ENCODE measurements at regions of chr17 and their contacts with region 1.

Region 1: GRCh38 chr17:49031965-49032928 is 35.1 kb downstream of the IGF2BP1 start:
- DNase-seq: peak in 1 of 2 experiments; percentile 60
- H3K4me3 ChIP-seq: no peak overlapping the region
- H3K27ac ChIP-seq: 0 out of 2 replicates have a peak overlapping the region, but pooled peaks have one; percentile 21
- H3K4me1 ChIP-seq: peaks cover 2 to 8% (median 5%) of the 10 kb centered on the region in 4 experiments; a peak in 4 of 7 replicates
- H3K27me3 ChIP-seq: no peaks in the 10 kb centered on the region
- CTCF ChIP-seq: peak; percentile 55 to 91 (median 90)
- EP300 ChIP-seq: 0 out of 3 replicates have a peak, but pooled peaks of 1 of the 2 experiments have one; percentile 51
- POLR2A ChIP-seq: 0 out of 3 replicates have a peak, but pooled peaks of 1 of the 2 experiments have one; percentile 33
- RAD21 ChIP-seq: peak; percentile 97 to 99

Region 2: DNA sequence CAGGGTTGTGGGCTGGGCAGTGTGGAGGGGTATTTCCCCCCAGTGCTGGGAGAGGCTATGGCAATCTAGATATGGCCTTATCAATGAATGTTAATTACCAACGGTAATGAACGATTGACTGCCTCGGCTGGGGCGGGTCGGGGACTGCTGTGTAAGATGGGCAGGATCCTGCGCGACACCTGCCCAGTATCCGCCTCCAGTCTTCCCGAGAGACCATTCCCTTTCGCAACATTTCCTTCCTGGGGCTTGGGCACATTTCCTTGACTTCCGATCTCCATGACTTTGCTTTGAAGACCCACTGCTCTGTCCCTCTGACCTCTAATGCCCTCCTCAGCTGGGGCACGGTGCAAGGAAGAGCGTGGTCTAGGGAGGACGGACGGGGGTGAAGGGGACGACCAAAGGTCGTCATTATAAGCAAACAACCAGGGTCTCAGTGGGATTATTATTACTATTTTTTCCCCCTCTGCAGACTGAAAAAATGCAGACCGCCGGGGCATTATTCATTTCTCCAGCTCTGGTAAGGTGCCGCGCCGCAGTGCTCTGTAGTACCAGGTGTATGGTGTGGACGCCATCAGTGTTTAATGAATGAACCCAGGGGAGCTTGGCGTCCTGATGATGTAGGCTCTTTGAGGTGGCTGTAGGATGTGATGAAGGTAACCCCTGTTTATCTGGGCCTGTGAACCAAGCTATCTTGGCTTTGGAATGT is 139.2 kb before region 1 on chr17:
- CTCF ChIA-PET with region 1: interaction called, 11 read pairs
- POLR2A ChIA-PET with region 1: interaction called, 6 read pairs
- DNase-seq: no peak
- H3K4me3 ChIP-seq: peak overlapping the region; percentile 90 to 95 (median 94)
- H3K27ac ChIP-seq: peak overlapping the region; percentile 33; the same call in 1 of the 2 replicates
- H3K4me1 ChIP-seq: peaks cover 0 to 6% (median 3%) of the 10 kb centered on the region in 4 experiments; a peak in 3 of 7 replicates
- H3K27me3 ChIP-seq: no peaks in the 10 kb centered on the region
- CTCF ChIP-seq: no peak
- EP300 ChIP-seq: no peak
- POLR2A ChIP-seq: peak in 1 of 2 experiments; percentile 57; a peak in 1 of 3 replicates
- RAD21 ChIP-seq: no peak

Region 3: DNA sequence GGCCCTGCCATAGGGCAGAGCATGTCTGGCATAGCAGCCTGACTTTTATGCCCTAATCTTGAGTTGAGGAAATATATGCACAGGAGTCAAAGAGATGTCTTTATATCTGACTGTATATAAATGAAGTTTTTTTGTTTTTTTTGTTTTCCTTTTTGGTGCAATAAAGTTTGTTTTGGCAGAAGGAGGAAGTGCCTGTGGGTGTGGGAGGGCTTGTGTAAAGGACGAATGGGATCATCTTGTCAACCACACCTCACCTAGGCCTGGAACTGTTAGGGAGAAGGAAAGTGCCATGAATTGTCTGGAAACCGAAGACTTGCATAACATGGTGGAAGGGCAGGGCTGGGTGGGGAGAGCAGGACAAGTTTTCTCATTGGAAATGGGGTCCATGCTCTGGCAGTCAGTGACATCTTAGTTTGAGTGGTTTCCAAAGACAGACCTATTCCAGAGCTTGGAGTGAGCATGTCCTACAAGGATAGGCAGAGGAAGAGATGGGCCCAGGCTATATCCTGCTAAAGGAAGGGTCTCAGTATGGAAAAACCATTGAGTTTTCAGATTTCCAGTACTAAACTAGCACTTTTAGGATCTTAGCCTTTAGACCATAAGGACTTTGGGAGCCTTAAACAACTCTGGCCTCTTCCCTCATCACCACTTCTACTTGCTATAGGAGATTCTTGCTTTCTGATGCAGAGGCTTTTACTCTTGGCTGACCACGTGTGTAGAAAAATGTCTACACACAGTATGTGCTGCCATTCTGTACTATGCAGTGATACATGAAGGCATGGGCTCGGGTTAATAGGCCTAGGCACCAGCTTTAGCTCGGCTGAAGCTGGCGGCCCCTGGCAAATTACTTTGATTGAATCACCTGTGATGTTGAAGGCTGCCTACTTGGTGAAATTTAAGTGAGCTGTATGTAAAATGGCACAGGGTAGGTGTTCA is 103.1 kb before region 1 on chr17:
- CTCF ChIA-PET with region 1: interaction called, 10 read pairs
- POLR2A ChIA-PET with region 1: interaction called, 9 read pairs
- DNase-seq: no peak
- H3K4me3 ChIP-seq: no peak overlapping the region
- H3K27ac ChIP-seq: no peak overlapping the region
- H3K4me1 ChIP-seq: no peaks in the 10 kb centered on the region
- H3K27me3 ChIP-seq: no peaks in the 10 kb centered on the region
- CTCF ChIP-seq: no peak
- EP300 ChIP-seq: no peak
- POLR2A ChIP-seq: no peak; a peak in 1 of 3 replicates
- RAD21 ChIP-seq: no peak

Region 4: GRCh38 chr17:48954300-48954755 is 77.9 kb before region 1 on chr17:
- CTCF ChIA-PET with region 1: interaction called, 64 read pairs
- POLR2A ChIA-PET with region 1: interaction called, 3 read pairs
- DNase-seq: peak in 1 of 2 experiments; percentile 70
- H3K4me3 ChIP-seq: no peak overlapping the region
- H3K27ac ChIP-seq: no peak overlapping the region
- H3K4me1 ChIP-seq: peaks cover 0 to 5% (median 3%) of the 10 kb centered on the region in 4 experiments; a peak in 3 of 7 replicates
- H3K27me3 ChIP-seq: no peaks in the 10 kb centered on the region
- CTCF ChIP-seq: peak; percentile 77 to 81 (median 80)
- EP300 ChIP-seq: no peak
- POLR2A ChIP-seq: no peak
- RAD21 ChIP-seq: peak; percentile 89 to 95

Region 5: GRCh38 chr17:48970224-48970623 is 62.0 kb before region 1 on chr17:
- CTCF ChIA-PET with region 1: interaction called, 15 read pairs
- POLR2A ChIA-PET with region 1: interaction called, 3 read pairs
- DNase-seq: no peak
- H3K4me3 ChIP-seq: no peak overlapping the region
- H3K27ac ChIP-seq: no peak overlapping the region
- H3K4me1 ChIP-seq: peaks cover 2 to 12% (median 8%) of the 10 kb centered on the region in 4 experiments
- H3K27me3 ChIP-seq: peaks cover 0 to 2% (median 0%) of the 10 kb centered on the region in 4 experiments; a peak in 1 of 7 replicates
- CTCF ChIP-seq: no peak
- EP300 ChIP-seq: no peak
- POLR2A ChIP-seq: no peak
- RAD21 ChIP-seq: no peak

Region 6: GRCh38 chr17:49003623-49004511 is 28.4 kb before region 1 on chr17:
- CTCF ChIA-PET with region 1: interaction called, 74 read pairs
- POLR2A ChIA-PET with region 1: interaction called, 21 read pairs
- DNase-seq: peak in 1 of 2 experiments; percentile 67
- H3K4me3 ChIP-seq: peak overlapping the region; percentile 34 to 91 (median 46); a peak in 7 of 8 replicates
- H3K27ac ChIP-seq: no peak overlapping the region
- H3K4me1 ChIP-seq: peaks cover 1 to 25% (median 19%) of the 10 kb centered on the region in 4 experiments; a peak in 6 of 7 replicates
- H3K27me3 ChIP-seq: no peaks in the 10 kb centered on the region
- CTCF ChIP-seq: no peak
- EP300 ChIP-seq: no peak
- POLR2A ChIP-seq: no peak; a peak in 1 of 3 replicates
- RAD21 ChIP-seq: no peak; a peak in 2 of 4 replicates

Region 7: GRCh38 chr17:49045376-49045775 is 13.1 kb after region 1 on chr17:
- CTCF ChIA-PET with region 1: interaction called, 34 read pairs
- POLR2A ChIA-PET with region 1: interaction called, 7 read pairs
- DNase-seq: no peak
- H3K4me3 ChIP-seq: no peak overlapping the region
- H3K27ac ChIP-seq: no peak overlapping the region
- H3K4me1 ChIP-seq: no peaks in the 10 kb centered on the region; a peak in 1 of 7 replicates
- H3K27me3 ChIP-seq: no peaks in the 10 kb centered on the region
- CTCF ChIP-seq: no peak
- EP300 ChIP-seq: no peak
- POLR2A ChIP-seq: no peak
- RAD21 ChIP-seq: no peak

Region 8: GRCh38 chr17:49132699-49133364 is 100.6 kb after region 1 on chr17 and contains the start of gene B4GALNT2:
- CTCF ChIA-PET with region 1: no interaction called
- POLR2A ChIA-PET with region 1: no interaction called
- DNase-seq: peak in 1 of 2 experiments; percentile 71
- H3K4me3 ChIP-seq: peak within 1 kb of the TSS; percentile 36 to 66 (median 58)
- H3K27ac ChIP-seq: no peak within 1 kb of the TSS
- H3K4me1 ChIP-seq: peaks cover 0 to 2% (median 0%) of the 10 kb centered on the region in 4 experiments; a peak in 3 of 7 replicates
- H3K27me3 ChIP-seq: peaks cover 16 to 33% (median 29%) of the 10 kb centered on the region in 4 experiments
- CTCF ChIP-seq: no peak
- EP300 ChIP-seq: no peak
- POLR2A ChIP-seq: no peak
- RAD21 ChIP-seq: no peak
- total RNA-seq, gene B4GALNT2: 0.04 TPM in 1 of 2 replicates, not detected in the other

Region 9: DNA sequence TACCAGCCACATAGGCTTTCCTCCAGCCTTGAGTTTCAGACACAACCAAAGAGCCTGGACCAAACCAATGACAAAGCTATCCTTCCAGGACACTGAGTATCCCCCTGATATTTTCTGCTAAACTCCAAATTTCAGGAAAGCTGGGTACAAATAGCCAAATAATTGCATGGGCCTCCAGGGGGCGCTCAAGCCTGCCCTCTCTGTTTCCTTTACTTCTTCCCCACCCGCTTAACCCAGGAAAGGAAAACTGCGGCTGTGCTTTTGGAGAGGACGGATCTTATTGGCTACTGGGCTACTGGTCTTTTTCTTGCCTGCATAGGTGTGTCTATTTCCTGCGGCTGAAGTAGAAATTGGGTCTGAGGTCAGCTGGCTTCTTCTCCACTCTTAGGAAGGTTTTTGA is 148.1 kb after region 1 on chr17:
- CTCF ChIA-PET with region 1: no interaction called
- POLR2A ChIA-PET with region 1: no interaction called
- DNase-seq: peak in 1 of 2 experiments; percentile 89
- H3K4me3 ChIP-seq: no peak overlapping the region
- H3K27ac ChIP-seq: no peak overlapping the region
- H3K4me1 ChIP-seq: no peaks in the 10 kb centered on the region
- H3K27me3 ChIP-seq: no peaks in the 10 kb centered on the region
- CTCF ChIP-seq: peak; percentile 60 to 93 (median 75)
- EP300 ChIP-seq: no peak
- POLR2A ChIP-seq: no peak
- RAD21 ChIP-seq: peak; percentile 77 to 81

Measured in H1 (cell line).